CD4-positive, alpha-beta T cell (primary cell): ENCODE measurements at regions of chr14 and their contacts with region 1.

Region 1: DNA sequence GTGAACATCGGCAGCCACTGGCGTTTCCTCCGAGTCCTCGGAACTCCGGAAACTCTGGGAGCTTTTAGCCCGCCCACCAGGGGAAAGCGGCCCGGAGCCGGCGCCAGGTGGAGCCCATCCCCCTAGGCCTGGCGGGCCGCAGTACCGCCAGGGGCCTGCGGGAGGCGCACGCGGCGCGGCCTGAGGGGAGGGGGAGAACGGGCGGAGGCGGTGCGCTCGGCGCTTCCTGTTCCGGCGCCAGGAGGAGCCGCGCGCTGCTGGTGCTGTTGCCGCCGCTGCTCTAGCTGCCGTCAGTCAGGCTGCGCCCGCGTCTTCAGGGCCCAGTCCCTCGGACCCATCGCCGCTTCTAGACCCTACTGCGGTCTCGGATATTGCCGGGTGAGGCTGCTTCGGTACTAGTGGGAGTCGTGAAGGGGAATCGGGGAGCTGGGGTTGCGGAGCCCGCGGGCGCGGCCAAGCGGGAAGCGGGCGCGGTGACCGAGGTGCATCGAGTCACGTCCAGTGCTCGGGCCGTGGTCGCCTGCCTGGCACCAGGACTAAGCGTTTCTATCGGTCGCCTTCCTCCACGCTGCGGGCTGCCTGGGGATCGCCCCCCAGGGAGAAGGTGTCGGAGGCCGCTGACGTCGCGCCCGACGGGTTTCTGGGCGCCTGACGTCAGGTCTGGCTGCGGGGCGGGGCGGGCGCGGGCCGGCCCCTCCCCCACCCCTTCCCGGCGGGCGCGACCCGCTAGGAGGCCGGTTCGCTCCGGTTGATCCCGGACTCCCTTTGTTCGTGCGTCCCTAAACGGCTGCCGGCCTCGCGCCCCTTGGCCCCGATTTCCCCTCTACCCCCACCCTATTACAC is at the start of gene MAPK1IP1L:
- DNase-seq: peak; percentile 83 to 95 (median 90)
- ATAC-seq: peak; percentile 88
- H3K4me3 ChIP-seq: peak within 1 kb of the TSS; percentile 91
- H3K4me3 Mint-ChIP-seq: peak within 1 kb of the TSS; percentile 95
- H3K27ac ChIP-seq: peak within 1 kb of the TSS; percentile 98 to 99
- H3K27ac Mint-ChIP-seq: peak within 1 kb of the TSS; percentile 96
- H3K4me1 ChIP-seq: peaks cover 27% of the 10 kb centered on the region
- H3K4me1 Mint-ChIP-seq: peaks cover 49% of the 10 kb centered on the region
- H3K27me3 ChIP-seq: no peaks in the 10 kb centered on the region
- H3K27me3 Mint-ChIP-seq: no peaks in the 10 kb centered on the region
- CTCF ChIP-seq: peak; percentile 99
- total RNA-seq, gene MAPK1IP1L: 198 to 207 TPM

Region 2: DNA sequence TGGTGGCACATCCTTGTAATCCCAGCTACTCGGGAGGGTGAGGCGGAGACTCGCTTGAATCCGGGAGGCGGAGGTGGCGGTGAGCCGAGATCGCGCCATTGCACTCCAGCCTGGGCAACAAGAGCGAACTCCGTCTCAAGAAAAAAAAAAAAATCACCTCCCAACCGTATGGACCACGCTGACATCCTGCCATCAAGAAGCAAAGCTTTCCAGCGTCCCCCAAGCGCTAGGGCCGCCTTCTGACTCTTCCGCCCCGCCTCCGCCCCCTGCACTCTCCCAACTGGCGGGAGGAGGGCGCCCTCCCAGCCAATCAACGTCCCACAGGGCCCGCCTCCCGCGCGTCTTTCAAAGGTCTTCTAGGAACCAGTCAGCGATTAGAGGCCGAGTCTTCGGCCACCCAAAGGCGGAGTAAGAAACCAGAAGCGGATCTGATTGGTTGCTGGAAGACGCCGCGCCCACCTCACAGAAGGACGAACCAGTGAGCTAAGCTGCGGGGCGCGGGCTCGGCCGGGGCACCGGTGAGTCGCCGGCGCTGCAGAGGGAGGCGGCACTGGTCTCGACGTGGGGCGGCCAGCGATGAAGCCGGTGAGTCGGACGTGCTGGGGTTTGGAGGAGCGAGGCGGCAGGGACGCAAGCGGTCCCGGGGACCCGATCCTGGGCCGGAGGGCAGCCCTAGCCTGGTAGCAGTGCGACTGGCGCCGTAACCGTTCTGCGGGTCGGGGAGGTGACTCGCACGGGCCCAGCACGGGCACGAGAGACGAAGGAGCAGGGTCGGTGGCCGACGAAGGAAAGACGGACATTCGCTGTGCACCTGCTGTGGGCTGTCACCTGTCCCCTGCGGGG is 654.9 kb before region 1 on chr14 and contains the start of gene CDKN3:
- CTCF ChIA-PET with region 1: no interaction called
- POLR2A ChIA-PET with region 1: no interaction called
- intact Hi-C with region 1: loop called in 1 of 2 experiments (anchors 5 kb)
- DNase-seq: peak; percentile 92 to 99 (median 96)
- ATAC-seq: peak; percentile 95
- H3K4me3 ChIP-seq: peak within 1 kb of the TSS; percentile 88
- H3K4me3 Mint-ChIP-seq: peak within 1 kb of the TSS; percentile 87
- H3K27ac ChIP-seq: no peak within 1 kb of the TSS
- H3K27ac Mint-ChIP-seq: peak within 1 kb of the TSS; percentile 47
- H3K4me1 ChIP-seq: peaks cover 20% of the 10 kb centered on the region
- H3K4me1 Mint-ChIP-seq: peaks cover 17% of the 10 kb centered on the region
- H3K27me3 ChIP-seq: no peaks in the 10 kb centered on the region
- H3K27me3 Mint-ChIP-seq: no peaks in the 10 kb centered on the region
- CTCF ChIP-seq: no peak
- total RNA-seq, gene CDKN3: 0.61 to 1.4 TPM

Region 3: GRCh38 chr14:54857830-54858269 is 193.8 kb before region 1 on chr14:
- CTCF ChIA-PET with region 1: no interaction called
- POLR2A ChIA-PET with region 1: no interaction called
- intact Hi-C with region 1: no loop called
- DNase-seq: peak in 2 of 14 experiments; percentile 44 to 45
- ATAC-seq: no peak
- H3K4me3 ChIP-seq: no peak overlapping the region
- H3K4me3 Mint-ChIP-seq: no peak overlapping the region
- H3K27ac ChIP-seq: no peak overlapping the region
- H3K27ac Mint-ChIP-seq: no peak overlapping the region
- H3K4me1 ChIP-seq: peaks cover 8% of the 10 kb centered on the region
- H3K4me1 Mint-ChIP-seq: peaks cover 32% of the 10 kb centered on the region
- H3K27me3 ChIP-seq: no peaks in the 10 kb centered on the region
- H3K27me3 Mint-ChIP-seq: no peaks in the 10 kb centered on the region
- CTCF ChIP-seq: no peak

Region 4: DNA sequence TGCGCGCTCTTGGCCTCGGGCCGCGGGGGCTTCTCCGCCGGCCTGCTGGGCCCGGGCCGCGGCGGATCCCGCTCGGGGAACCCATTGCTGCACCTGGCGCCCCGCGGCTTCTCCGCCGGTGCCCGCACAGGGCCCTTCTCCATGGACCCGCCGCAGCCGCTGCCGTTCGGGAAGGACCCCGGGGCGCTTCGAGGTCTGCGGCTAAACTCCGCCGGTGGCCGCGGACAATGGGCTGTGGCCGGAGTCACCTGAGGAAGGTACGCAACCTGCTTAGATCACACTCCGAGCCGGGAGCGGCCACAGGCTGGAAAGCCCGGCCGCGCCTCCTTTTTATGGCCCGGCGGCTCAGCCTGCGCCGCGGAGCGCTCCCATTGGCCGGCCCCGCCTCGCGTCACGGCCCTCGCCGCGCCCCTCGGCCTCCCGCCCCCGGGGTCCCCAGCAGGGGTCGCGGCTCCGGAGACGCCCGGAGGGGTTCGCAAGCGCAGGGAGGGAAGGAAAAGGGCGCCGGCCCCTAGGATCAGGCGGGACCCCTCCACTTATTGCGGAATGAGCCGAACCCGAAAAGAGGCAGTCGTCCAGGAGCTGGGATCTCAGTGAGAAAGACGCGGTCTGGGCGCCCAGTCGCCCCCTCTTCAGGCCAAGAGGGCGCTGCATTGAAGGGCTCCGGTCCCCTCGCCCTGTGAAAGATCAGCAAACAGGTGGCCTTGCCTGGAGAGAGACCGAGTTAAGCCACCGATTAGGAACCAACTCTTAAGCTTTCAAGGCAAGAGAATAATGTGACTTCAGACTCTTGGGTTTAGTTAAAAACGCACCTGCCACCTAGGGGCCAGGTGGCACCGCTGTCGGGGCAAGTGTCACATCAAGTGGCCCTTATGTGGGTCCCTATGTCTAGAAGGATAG is 148.9 kb before region 1 on chr14 and contains the start of gene GCH1:
- CTCF ChIA-PET with region 1: interaction called, 12 read pairs
- POLR2A ChIA-PET with region 1: interaction called, 21 read pairs
- intact Hi-C with region 1: loop called in 1 of 2 experiments (anchors 10 kb)
- DNase-seq: peak; percentile 42 to 91 (median 65)
- ATAC-seq: peak; percentile 69
- H3K4me3 ChIP-seq: peak within 1 kb of the TSS; percentile 97
- H3K4me3 Mint-ChIP-seq: peak within 1 kb of the TSS; percentile 97
- H3K27ac ChIP-seq: peak within 1 kb of the TSS; percentile 92 to 95
- H3K27ac Mint-ChIP-seq: peak within 1 kb of the TSS; percentile 85
- H3K4me1 ChIP-seq: peaks cover 35% of the 10 kb centered on the region
- H3K4me1 Mint-ChIP-seq: peaks cover 24% of the 10 kb centered on the region
- H3K27me3 ChIP-seq: no peaks in the 10 kb centered on the region
- H3K27me3 Mint-ChIP-seq: no peaks in the 10 kb centered on the region
- CTCF ChIP-seq: peak; percentile 80
- total RNA-seq, gene GCH1: 18.4 to 20.4 TPM

Region 5: DNA sequence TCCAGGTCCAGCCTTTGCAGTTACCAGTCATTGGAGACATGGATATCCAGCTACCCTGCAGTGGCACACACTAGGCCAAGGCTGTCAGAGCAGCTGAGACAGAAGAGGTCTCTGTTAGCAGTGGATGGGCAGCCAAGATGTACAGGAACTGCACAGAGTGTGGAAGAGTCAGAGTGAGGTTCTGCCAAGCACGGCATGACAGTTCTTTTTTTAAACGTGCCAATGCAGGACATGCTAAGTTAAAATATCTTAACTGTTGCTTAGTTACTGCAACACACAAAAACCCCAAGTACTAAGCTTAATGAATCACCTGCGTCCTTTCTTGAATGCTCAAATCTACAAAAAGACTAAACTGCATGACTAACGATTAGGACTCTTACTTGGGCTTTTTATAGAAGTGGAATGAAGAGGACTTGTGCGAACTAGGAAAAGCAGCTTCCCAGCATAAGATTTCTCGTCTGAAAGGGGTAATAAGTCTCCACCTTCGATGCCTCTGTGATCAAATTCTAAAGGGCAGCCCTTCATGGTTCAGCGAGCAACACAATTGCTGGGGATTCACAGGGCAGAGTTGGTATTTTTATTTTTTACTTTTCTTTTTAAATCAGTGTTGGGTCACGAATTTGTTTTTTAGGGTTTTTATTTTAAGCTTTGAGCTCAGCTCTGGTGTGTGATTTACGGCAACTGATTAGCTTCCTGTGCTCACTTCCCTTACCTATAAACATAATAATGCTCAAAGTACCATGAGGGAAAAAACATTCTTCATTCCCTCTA is 20.4 kb after region 1 on chr14:
- CTCF ChIA-PET with region 1: interaction called, 24 read pairs
- POLR2A ChIA-PET with region 1: interaction called, 42 read pairs
- intact Hi-C with region 1: no loop called
- DNase-seq: peak in 6 of 14 experiments; percentile 7 to 68 (median 34)
- ATAC-seq: peak; percentile 82
- H3K4me3 ChIP-seq: peak overlapping the region; percentile 3
- H3K4me3 Mint-ChIP-seq: peak overlapping the region; percentile 64
- H3K27ac ChIP-seq: peak overlapping the region in 1 of 2 donors; percentile 38
- H3K27ac Mint-ChIP-seq: peak overlapping the region; percentile 79
- H3K4me1 ChIP-seq: peaks cover 21% of the 10 kb centered on the region
- H3K4me1 Mint-ChIP-seq: peaks cover 45% of the 10 kb centered on the region
- H3K27me3 ChIP-seq: no peaks in the 10 kb centered on the region
- H3K27me3 Mint-ChIP-seq: no peaks in the 10 kb centered on the region
- CTCF ChIP-seq: no peak

Region 6: DNA sequence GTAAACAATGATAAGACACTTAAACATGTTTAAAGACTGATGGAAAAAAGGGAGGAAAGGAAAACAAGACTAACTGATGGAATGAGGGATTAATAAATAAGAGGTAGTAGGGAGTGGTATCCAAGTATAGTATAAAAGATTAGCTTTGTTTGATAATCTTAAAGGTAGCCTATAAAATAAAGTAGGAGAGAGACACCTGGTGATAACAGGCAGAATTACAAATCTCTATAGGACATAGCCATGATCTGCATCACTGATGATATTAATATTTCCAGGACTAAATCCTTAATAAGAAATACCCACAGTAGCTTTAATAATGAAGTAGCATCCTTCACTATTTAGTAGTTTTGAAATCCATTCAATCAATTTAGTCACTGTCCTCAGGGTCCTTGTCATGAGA is 109.3 kb after region 1 on chr14:
- CTCF ChIA-PET with region 1: interaction called, 21 read pairs
- POLR2A ChIA-PET with region 1: interaction called, 8 read pairs
- intact Hi-C with region 1: no loop called
- DNase-seq: peak in 3 of 14 experiments; percentile 62 to 68 (median 66)
- ATAC-seq: peak; percentile 75
- H3K4me3 ChIP-seq: no peak overlapping the region
- H3K4me3 Mint-ChIP-seq: no peak overlapping the region
- H3K27ac ChIP-seq: no peak overlapping the region
- H3K27ac Mint-ChIP-seq: no peak overlapping the region
- H3K4me1 ChIP-seq: no peaks in the 10 kb centered on the region
- H3K4me1 Mint-ChIP-seq: peaks cover 13% of the 10 kb centered on the region
- H3K27me3 ChIP-seq: no peaks in the 10 kb centered on the region
- H3K27me3 Mint-ChIP-seq: no peaks in the 10 kb centered on the region
- CTCF ChIP-seq: peak; percentile 64

Region 7: GRCh38 chr14:55411426-55412389 is 360.1 kb after region 1 on chr14 and contains the start of gene ATG14:
- CTCF ChIA-PET with region 1: interaction called, 3 read pairs
- POLR2A ChIA-PET with region 1: no interaction called
- intact Hi-C with region 1: loop called in 1 of 2 experiments (anchors 2 kb)
- DNase-seq: peak; percentile 51 to 85 (median 66)
- ATAC-seq: peak; percentile 98
- H3K4me3 ChIP-seq: peak within 1 kb of the TSS; percentile 92
- H3K4me3 Mint-ChIP-seq: peak within 1 kb of the TSS; percentile 85
- H3K27ac ChIP-seq: peak within 1 kb of the TSS; percentile 49 to 61
- H3K27ac Mint-ChIP-seq: peak within 1 kb of the TSS; percentile 69
- H3K4me1 ChIP-seq: peaks cover 9% of the 10 kb centered on the region
- H3K4me1 Mint-ChIP-seq: peaks cover 50% of the 10 kb centered on the region
- H3K27me3 ChIP-seq: no peaks in the 10 kb centered on the region
- H3K27me3 Mint-ChIP-seq: no peaks in the 10 kb centered on the region
- CTCF ChIP-seq: no peak
- total RNA-seq, gene ATG14: 19.9 to 20.5 TPM